Mammary epithelial cell (primary cell): ENCODE measurements at regions of chr12 and their contacts with region 1.

Region 1: GRCh38 chr12:66409195-66409871 is 107.0 kb downstream of the HELB start:
- DNase-seq: peak; percentile 41
- H3K4me3 ChIP-seq: no peak overlapping the region
- H3K27ac ChIP-seq: no peak overlapping the region
- H3K4me1 ChIP-seq: peaks cover 9% of the 10 kb centered on the region
- H3K27me3 ChIP-seq: no peaks in the 10 kb centered on the region
- CTCF ChIP-seq: peak; percentile 43 to 71

Region 2: GRCh38 chr12:66130277-66131066 is 278.9 kb before region 1 on chr12 and contains the start of gene LLPH:
- CTCF ChIA-PET with region 1: no interaction called
- dilution Hi-C with region 1: no loop called
- in situ Hi-C with region 1: loop called in 1 of 2 experiments (anchors 25 kb)
- intact Hi-C with region 1: no loop called
- DNase-seq: peak; percentile 93
- H3K4me3 ChIP-seq: peak within 1 kb of the TSS; percentile 66 to 96 (median 84)
- H3K27ac ChIP-seq: peak within 1 kb of the TSS; percentile 78
- H3K4me1 ChIP-seq: peaks cover 13% of the 10 kb centered on the region
- H3K27me3 ChIP-seq: no peaks in the 10 kb centered on the region
- CTCF ChIP-seq: no peak
- total RNA-seq, gene LLPH: 3.0 to 35.0 TPM

Region 3: GRCh38 chr12:66269757-66270383 is 139.5 kb before region 1 on chr12:
- CTCF ChIA-PET with region 1: interaction called, 4 read pairs
- dilution Hi-C with region 1: no loop called
- in situ Hi-C with region 1: loop called (anchors 5 kb)
- intact Hi-C with region 1: loop called (anchors 1 kb)
- DNase-seq: peak; percentile 48
- H3K4me3 ChIP-seq: no peak overlapping the region
- H3K27ac ChIP-seq: no peak overlapping the region
- H3K4me1 ChIP-seq: peaks cover 6% of the 10 kb centered on the region
- H3K27me3 ChIP-seq: peaks cover 3% of the 10 kb centered on the region
- CTCF ChIP-seq: peak; percentile 70 to 74

Region 4: DNA sequence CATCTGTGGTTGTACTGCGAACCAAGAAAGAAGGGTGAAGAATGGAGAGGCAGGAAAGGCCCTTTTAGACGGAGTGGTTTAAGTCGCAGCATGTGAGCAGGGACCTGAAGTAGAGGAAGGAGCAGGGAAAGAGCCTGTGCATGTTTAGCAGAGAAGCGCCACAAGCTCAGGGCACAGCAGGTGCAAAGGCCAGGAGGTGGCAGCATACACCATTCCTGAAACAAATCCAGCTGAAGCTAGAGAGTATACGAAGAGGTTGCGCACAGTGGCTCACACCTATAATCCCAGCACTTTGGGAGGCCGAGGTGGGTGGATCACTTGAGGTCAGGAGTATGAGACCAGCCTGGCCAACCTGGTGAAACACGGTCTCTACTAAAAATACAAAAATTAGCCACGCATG is 57.1 kb before region 1 on chr12:
- CTCF ChIA-PET with region 1: no interaction called
- dilution Hi-C with region 1: no loop called
- in situ Hi-C with region 1: no loop called
- intact Hi-C with region 1: loop called (anchors 1 kb)
- DNase-seq: no peak
- H3K4me3 ChIP-seq: no peak overlapping the region
- H3K27ac ChIP-seq: no peak overlapping the region
- H3K4me1 ChIP-seq: no peaks in the 10 kb centered on the region
- H3K27me3 ChIP-seq: no peaks in the 10 kb centered on the region
- CTCF ChIP-seq: peak; percentile 36 to 41

Region 5: GRCh38 chr12:66693901-66694675 is 284.8 kb after region 1 on chr12:
- CTCF ChIA-PET with region 1: no interaction called
- dilution Hi-C with region 1: no loop called
- in situ Hi-C with region 1: no loop called
- intact Hi-C with region 1: loop called (anchors 5 kb)
- DNase-seq: peak; percentile 49
- H3K4me3 ChIP-seq: no peak overlapping the region
- H3K27ac ChIP-seq: no peak overlapping the region
- H3K4me1 ChIP-seq: no peaks in the 10 kb centered on the region
- H3K27me3 ChIP-seq: no peaks in the 10 kb centered on the region
- CTCF ChIP-seq: peak; percentile 47 to 68